T-cell (primary cell): ENCODE measurements at regions of chr4 and their contacts with region 1.

Region 1: DNA sequence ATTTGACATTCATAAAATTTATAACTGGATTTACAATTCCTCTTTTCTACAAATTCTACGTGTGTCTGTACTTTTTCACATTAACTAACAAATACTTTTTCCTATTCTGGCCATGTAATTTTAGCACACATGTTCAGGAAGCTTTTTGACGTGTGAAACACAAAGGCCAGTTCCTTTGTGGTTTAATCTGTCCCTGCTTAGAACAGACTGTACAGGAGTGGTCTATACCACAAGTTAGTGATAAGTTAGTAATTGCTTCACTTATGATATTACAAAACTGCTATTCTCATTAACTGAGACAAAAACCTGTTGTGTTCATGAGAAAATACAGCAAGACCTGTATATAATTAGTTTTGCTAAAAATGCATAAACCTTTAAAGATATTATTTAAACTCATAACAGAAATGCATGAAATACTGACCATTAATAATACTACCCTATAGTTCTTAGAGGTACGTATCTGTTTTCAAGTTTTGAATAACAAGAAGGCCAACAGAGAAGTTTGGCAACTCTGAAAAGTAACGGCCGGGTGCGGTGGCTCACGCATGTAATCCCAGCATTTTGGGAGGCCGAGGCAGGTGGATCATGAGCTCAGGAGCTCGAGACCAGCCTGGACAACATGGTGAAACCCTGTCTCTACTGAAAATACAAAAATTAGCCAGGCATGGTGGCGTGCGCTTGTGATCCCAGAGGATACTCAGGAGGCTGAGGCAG is 13.7 kb upstream of the AREG start:
- DNase-seq: no peak
- ATAC-seq: no peak
- H3K4me3 ChIP-seq: no peak overlapping the region
- H3K4me3 Mint-ChIP-seq: no peak overlapping the region
- H3K27ac ChIP-seq: no peak overlapping the region
- H3K27ac Mint-ChIP-seq: no peak overlapping the region
- H3K4me1 ChIP-seq: no peaks in the 10 kb centered on the region
- H3K4me1 Mint-ChIP-seq: no peaks in the 10 kb centered on the region
- H3K27me3 ChIP-seq: peaks cover 0 to 4% of the 10 kb centered on the region in 2 experiments
- H3K27me3 Mint-ChIP-seq: peaks cover 2 to 12% of the 10 kb centered on the region in 2 donors

Region 2: DNA sequence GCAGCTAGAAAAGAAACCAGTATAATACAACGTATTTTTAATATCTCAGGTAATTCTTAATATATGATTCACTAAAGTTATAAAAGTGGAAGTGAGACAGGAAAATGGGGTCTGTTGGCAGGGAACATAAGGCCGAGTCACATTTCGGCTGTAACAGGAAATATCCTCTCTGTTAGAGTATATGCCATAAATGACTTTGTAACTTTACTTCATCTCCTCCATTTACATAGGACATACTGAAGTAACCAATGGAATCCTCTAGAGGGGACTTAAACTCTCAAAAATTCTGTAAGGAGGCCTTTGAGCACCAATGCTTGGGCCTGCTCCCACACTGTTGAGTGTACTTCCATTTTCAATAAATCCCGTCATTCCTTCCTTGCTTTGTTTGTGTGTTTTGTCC is 1243.9 kb before region 1 on chr4:
- CTCF ChIA-PET with region 1: no interaction called
- POLR2A ChIA-PET with region 1: interaction called in 1 of 2 experiments, 11 read pairs
- DNase-seq: no peak
- ATAC-seq: no peak
- H3K4me3 ChIP-seq: no peak overlapping the region
- H3K4me3 Mint-ChIP-seq: no peak overlapping the region
- H3K27ac ChIP-seq: no peak overlapping the region
- H3K27ac Mint-ChIP-seq: no peak overlapping the region
- H3K4me1 ChIP-seq: no peaks in the 10 kb centered on the region
- H3K4me1 Mint-ChIP-seq: peaks cover 29 to 53% (median 49%) of the 10 kb centered on the region in 3 donors
- H3K27me3 ChIP-seq: no peaks in the 10 kb centered on the region
- H3K27me3 Mint-ChIP-seq: no peaks in the 10 kb centered on the region

Region 3: DNA sequence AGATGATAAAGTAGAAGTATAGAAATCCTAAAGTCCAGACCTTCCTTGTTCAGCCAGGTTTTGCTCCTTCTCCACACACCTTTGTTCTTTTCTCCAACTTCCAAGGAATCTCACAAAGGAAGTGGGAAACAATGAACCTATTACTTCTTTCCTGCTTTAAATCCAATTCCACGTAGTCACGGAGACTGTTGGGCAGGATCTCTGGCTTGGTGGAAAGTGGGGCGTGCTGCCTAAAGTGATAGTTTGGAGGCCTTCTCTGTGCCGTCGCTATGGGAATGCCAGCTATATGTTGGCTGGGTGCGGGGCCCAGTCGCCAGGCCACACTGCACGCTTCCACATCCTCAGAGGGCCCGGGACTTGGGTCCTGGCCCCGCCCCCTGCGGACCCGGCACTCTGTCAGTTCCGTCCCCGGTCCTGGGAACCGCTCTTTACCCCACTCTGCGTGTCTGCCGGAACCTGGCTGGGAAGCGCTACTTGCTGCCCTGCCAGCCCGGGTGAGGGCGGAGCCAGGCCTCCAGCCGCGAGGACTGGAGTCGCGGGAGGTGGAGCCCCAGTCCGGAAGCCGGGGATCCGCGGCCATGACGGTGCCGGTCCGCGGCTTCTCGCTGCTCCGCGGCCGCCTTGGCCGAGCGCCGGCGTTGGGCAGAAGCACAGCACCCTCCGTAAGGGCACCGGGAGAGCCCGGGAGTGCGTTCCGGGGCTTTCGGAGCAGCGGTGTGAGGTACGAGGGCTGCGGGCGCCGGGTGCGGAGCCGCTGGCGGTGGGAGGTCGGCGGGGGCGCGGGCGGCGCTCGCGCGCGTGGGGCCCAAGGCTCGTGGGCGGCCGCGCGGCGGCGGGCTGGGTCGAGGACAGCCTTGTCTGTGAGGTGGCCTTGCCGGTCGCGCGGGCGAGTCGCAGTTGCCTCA is 273.5 kb before region 1 on chr4 and contains the start of gene MTHFD2L:
- CTCF ChIA-PET with region 1: no interaction called
- POLR2A ChIA-PET with region 1: no interaction called
- DNase-seq: peak; percentile 56 to 84 (median 70)
- ATAC-seq: peak; percentile 96 to 98 (median 97)
- H3K4me3 ChIP-seq: peak within 1 kb of the TSS; percentile 81 to 91
- H3K4me3 Mint-ChIP-seq: peak within 1 kb of the TSS; percentile 87 to 89 (median 89)
- H3K27ac ChIP-seq: peak within 1 kb of the TSS; percentile 65
- H3K27ac Mint-ChIP-seq: peak within 1 kb of the TSS; percentile 36 to 90
- H3K4me1 ChIP-seq: peaks cover 13 to 14% of the 10 kb centered on the region in 2 experiments
- H3K4me1 Mint-ChIP-seq: peaks cover 14 to 29% (median 27%) of the 10 kb centered on the region in 3 donors
- H3K27me3 ChIP-seq: peaks cover 0 to 3% of the 10 kb centered on the region in 2 experiments
- H3K27me3 Mint-ChIP-seq: no peaks in the 10 kb centered on the region
- total RNA-seq, gene MTHFD2L: 7.2 to 9.8 (median 7.9) TPM